Ascending aorta (tissue), 2 donors: ENCODE measurements at regions of chr10 and their contacts with region 1.

Region 1: DNA sequence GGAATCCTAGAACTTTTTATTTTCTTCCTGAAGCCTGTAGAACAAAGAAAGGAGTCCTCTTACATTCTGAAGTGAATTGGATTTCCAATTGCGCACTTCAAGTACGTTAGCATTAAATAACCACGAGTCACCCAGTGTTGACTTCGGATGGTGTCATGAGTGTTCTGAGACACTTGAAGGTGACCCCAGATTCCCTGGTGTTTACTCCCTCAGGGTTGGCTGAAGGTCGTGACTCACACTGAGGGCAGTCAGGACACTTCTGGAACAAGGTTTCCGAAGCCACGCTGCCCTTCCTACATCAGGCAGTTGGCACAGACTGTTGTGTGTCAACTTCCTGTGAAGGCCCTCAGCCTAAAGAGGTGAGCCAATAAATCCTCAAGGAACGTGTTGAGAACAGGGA is 186.6 kb upstream of the CELF2 start:
- DNase-seq: peak; percentile 53 to 94
- H3K4me3 ChIP-seq: peak overlapping the region in 1 of 2 donors; percentile 32
- H3K27ac ChIP-seq: peak overlapping the region; percentile 84 to 86
- H3K4me1 ChIP-seq: peaks cover 0 to 17% of the 10 kb centered on the region in 2 donors
- H3K27me3 ChIP-seq: no peaks in the 10 kb centered on the region
- CTCF ChIP-seq: no peak

Region 2: GRCh38 chr10:10247585-10247984 is 583.5 kb before region 1 on chr10:
- intact Hi-C with region 1: no loop called
- DNase-seq: no peak
- H3K4me3 ChIP-seq: no peak overlapping the region
- H3K27ac ChIP-seq: no peak overlapping the region
- H3K4me1 ChIP-seq: no peaks in the 10 kb centered on the region
- H3K27me3 ChIP-seq: no peaks in the 10 kb centered on the region
- CTCF ChIP-seq: no peak

Region 3: GRCh38 chr10:10605551-10606081 is 225.5 kb before region 1 on chr10:
- intact Hi-C with region 1: loop called (anchors 2 kb)
- DNase-seq: peak in 1 of 2 donors; percentile 81
- H3K4me3 ChIP-seq: no peak overlapping the region
- H3K27ac ChIP-seq: peak overlapping the region; percentile 74 to 80
- H3K4me1 ChIP-seq: no peaks in the 10 kb centered on the region
- H3K27me3 ChIP-seq: no peaks in the 10 kb centered on the region
- CTCF ChIP-seq: no peak

Region 4: DNA sequence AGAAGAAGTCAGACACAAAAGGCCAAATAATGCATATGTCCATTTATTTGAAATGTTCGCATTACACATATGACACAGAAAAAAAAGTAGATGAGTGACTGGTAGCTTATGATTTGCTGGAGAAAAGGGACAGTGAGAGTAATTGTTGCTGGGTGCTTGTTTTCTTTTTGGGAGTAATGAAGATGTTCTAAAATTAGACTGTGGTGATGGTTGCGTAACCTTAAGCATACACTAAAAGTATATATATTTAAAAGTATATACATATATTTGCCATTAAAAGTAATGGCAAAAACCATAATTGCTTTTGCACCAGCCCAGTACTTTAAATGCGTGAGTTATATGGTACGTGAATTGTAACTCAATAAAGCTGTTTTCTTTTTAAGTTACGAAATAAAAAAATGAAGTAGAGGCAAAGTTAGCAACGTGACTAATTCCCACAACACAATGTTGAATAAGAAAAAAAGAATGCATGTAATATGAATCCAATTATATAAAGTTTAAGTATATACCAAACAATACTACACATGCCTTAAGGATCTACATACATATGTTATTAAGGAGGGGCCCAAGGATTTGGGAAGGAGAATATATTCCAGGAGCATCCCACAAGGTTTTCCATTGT is 173.8 kb before region 1 on chr10:
- intact Hi-C with region 1: no loop called
- DNase-seq: no peak
- H3K4me3 ChIP-seq: no peak overlapping the region
- H3K27ac ChIP-seq: no peak overlapping the region
- H3K4me1 ChIP-seq: peaks cover 0 to 2% of the 10 kb centered on the region in 2 donors
- H3K27me3 ChIP-seq: no peaks in the 10 kb centered on the region
- CTCF ChIP-seq: no peak

Region 5: DNA sequence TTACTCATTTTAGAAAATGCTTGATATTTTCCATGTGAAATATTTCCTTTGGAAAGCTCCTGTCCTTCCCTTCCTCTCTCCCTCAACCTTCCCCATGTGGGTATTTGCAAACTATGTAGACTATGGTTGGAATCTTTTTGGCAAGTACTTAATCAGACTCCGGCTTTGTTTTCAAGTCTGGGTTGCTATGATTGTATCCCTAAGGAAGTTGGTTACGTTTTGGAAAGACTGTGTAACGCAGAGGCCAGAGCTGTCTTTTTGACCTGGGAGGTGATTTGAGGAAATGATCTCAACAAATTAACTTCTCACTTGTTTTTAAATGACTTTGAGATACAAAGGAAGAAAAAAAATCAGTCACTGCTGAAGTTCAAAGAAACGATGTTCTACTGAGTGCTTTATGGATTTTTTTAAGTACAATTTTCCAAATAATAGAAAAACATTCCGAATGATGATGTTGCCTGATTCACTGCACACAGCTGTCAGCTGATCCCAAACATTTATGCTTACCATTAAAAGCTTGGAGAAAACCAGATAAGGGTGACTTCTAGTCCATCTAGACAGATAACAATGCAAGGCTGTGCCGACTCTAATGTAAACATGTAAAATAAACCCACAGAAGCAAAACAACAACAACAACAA is 41.1 kb after region 1 on chr10:
- intact Hi-C with region 1: loop called (anchors 1 kb)
- DNase-seq: peak in 1 of 2 donors; percentile 84
- H3K4me3 ChIP-seq: peak overlapping the region in 1 of 2 donors; percentile 7
- H3K27ac ChIP-seq: peak overlapping the region; percentile 83 to 88
- H3K4me1 ChIP-seq: peaks cover 0 to 33% of the 10 kb centered on the region in 2 donors
- H3K27me3 ChIP-seq: no peaks in the 10 kb centered on the region
- CTCF ChIP-seq: no peak

Region 6: DNA sequence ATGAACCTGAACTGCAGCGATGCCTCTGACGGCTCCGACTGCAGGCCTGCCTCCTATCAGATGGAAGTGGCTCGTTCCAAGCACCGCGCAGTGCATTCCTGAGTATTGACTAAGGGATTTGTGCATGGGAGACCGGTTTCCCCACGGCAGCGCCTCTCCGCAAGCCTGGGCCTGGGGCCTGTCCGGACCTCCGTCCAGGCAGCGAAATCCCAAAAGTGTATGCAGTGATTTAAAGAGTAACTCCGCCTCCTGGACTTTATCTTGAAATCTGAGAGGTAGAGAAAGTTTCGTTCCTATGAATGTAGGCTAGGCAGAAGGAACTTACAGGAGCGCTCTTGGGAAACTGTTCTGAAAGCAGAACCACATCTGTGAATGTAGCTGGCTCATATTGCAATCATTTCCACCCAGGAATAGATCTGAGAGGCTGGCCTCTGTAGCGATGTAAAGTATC is 80.4 kb after region 1 on chr10:
- intact Hi-C with region 1: loop called (anchors 2 kb)
- DNase-seq: peak; percentile 19 to 91
- H3K4me3 ChIP-seq: peak overlapping the region; percentile 33 to 59
- H3K27ac ChIP-seq: peak overlapping the region; percentile 75 to 79
- H3K4me1 ChIP-seq: peaks cover 0 to 19% of the 10 kb centered on the region in 2 donors
- H3K27me3 ChIP-seq: no peaks in the 10 kb centered on the region
- CTCF ChIP-seq: no peak